ENCODE measurements at regions of chr1 and their contacts with region 1.

Region 1: GRCh38 chr1:111656086-111657017 is 36.8 kb downstream of the RAP1A start:
- DNase-seq: peak in 4 of 14 experiments; percentile 36 to 69 (median 57)
- ATAC-seq: no peak
- H3K4me3 ChIP-seq: no peak overlapping the region
- H3K4me3 Mint-ChIP-seq: peak overlapping the region; percentile 18
- H3K27ac ChIP-seq: no peak overlapping the region
- H3K27ac Mint-ChIP-seq: peak overlapping the region; percentile 13
- H3K4me1 ChIP-seq: peaks cover 30% of the 10 kb centered on the region
- H3K4me1 Mint-ChIP-seq: peaks cover 56% of the 10 kb centered on the region
- H3K27me3 ChIP-seq: no peaks in the 10 kb centered on the region
- H3K27me3 Mint-ChIP-seq: no peaks in the 10 kb centered on the region
- CTCF ChIP-seq: peak; percentile 64

Region 2: DNA sequence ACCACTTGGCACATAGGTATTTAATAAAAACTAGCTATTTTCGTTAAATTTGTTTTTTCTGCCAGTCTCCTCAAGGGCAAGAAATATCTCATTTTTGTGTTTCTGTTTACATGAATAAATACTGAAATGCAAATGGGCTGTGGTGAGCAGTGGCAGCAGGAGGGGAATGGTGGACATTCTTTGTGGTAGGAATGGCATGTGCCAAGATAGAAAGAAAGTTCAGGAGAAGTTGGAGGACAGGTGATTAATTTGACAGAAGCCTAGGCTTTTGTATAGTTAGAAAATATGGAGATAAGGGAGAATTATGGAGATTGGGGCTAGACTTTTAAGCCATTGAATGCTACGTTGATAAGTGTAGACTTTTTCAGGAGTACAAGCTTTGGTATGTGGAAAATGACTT is 28.2 kb before region 1 on chr1:
- CTCF ChIA-PET with region 1: interaction called, 3 read pairs
- POLR2A ChIA-PET with region 1: interaction called, 3 read pairs
- intact Hi-C with region 1: loop called (anchors 5 kb)
- DNase-seq: no peak
- ATAC-seq: no peak
- H3K4me3 ChIP-seq: no peak overlapping the region
- H3K4me3 Mint-ChIP-seq: peak overlapping the region; percentile 76
- H3K27ac ChIP-seq: no peak overlapping the region
- H3K27ac Mint-ChIP-seq: peak overlapping the region; percentile 95
- H3K4me1 ChIP-seq: peaks cover 22% of the 10 kb centered on the region
- H3K4me1 Mint-ChIP-seq: peaks cover 90% of the 10 kb centered on the region
- H3K27me3 ChIP-seq: no peaks in the 10 kb centered on the region
- H3K27me3 Mint-ChIP-seq: no peaks in the 10 kb centered on the region
- CTCF ChIP-seq: no peak

Region 3: GRCh38 chr1:111880881-111881837 is 224.8 kb after region 1 on chr1:
- CTCF ChIA-PET with region 1: no interaction called
- POLR2A ChIA-PET with region 1: no interaction called
- intact Hi-C with region 1: no loop called
- DNase-seq: no peak
- ATAC-seq: no peak
- H3K4me3 ChIP-seq: no peak overlapping the region
- H3K4me3 Mint-ChIP-seq: no peak overlapping the region
- H3K27ac ChIP-seq: no peak overlapping the region
- H3K27ac Mint-ChIP-seq: no peak overlapping the region
- H3K4me1 ChIP-seq: no peaks in the 10 kb centered on the region
- H3K4me1 Mint-ChIP-seq: no peaks in the 10 kb centered on the region
- H3K27me3 ChIP-seq: peaks cover 18% of the 10 kb centered on the region in 2 experiments
- H3K27me3 Mint-ChIP-seq: peaks cover 73% of the 10 kb centered on the region
- CTCF ChIP-seq: no peak